ENCODE measurements at regions of chr6 and their contacts with region 1.

Region 1: GRCh38 chr6:31569861-31570536 is 2.1 kb upstream of the LTA start:
- DNase-seq: no peak
- H3K4me3 ChIP-seq: no peak overlapping the region
- H3K27ac ChIP-seq: no peak overlapping the region
- H3K4me1 ChIP-seq: no peaks in the 10 kb centered on the region
- H3K27me3 ChIP-seq: peaks cover 0 to 28% (median 0%) of the 10 kb centered on the region in 3 donors
- CTCF ChIP-seq: no peak
- EP300 ChIP-seq: no peak
- POLR2A ChIP-seq: no peak

Region 2: GRCh38 chr6:31485055-31485454 is 84.9 kb before region 1 on chr6:
- intact Hi-C with region 1: no loop called
- DNase-seq: no peak
- H3K4me3 ChIP-seq: no peak overlapping the region
- H3K27ac ChIP-seq: no peak overlapping the region
- H3K4me1 ChIP-seq: no peaks in the 10 kb centered on the region
- H3K27me3 ChIP-seq: peaks cover 0 to under 1% (median 0%) of the 10 kb centered on the region in 3 donors
- CTCF ChIP-seq: no peak
- EP300 ChIP-seq: no peak
- POLR2A ChIP-seq: no peak

Region 3: DNA sequence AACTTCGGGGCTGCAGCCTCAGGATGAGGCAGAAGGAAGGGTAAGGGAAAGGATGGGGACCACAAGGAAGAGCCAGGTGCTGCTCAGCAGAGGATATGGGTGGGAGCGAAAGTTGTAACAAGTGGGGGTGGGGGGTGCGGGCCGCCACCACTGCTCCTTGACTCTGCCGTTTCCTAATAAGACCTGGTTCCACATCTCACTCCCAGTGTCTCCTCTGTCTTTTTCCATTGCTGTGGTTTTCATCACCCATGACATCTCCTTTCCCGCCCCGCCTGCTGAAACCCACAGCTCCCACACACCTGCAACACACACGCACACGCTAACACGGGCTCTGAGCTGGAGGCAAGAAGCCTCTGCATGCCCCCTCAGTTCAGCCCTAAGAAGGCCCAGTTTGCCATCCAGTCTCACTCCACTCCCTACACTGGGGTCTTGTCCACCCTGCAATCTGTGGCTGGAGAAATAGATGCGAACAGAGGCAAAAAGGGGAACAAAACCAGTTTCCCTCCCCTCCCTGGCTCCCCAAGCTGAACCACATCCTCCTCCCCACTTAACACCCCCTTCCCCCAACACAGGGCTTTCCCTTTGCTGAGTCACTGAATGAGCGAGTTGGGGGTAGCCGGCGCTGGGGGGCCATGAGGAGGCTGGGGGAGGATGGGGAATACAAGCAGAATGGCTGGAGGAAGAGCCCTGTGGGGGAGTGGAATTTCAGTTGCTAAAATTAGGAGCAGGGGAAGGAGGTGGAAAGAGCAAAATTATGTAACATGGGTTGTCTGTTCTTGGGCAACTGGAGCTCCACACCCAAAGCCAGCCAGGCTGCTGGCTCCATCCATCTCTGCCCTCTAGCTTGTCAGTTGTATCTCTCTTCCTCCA is 11.1 kb before region 1 on chr6:
- intact Hi-C with region 1: loop called (anchors 1 kb)
- DNase-seq: peak; percentile 69
- H3K4me3 ChIP-seq: no peak overlapping the region
- H3K27ac ChIP-seq: peak overlapping the region in 3 of 4 donors; percentile 40 to 55 (median 54)
- H3K4me1 ChIP-seq: peaks cover 0 to 20% (median 5%) of the 10 kb centered on the region in 4 donors
- H3K27me3 ChIP-seq: no peaks in the 10 kb centered on the region
- CTCF ChIP-seq: no peak
- EP300 ChIP-seq: no peak
- POLR2A ChIP-seq: no peak

Measured in sigmoid colon (tissue), 7 donors.